ENCODE measurements at regions of chr4 and their contacts with region 1.

Region 1: DNA sequence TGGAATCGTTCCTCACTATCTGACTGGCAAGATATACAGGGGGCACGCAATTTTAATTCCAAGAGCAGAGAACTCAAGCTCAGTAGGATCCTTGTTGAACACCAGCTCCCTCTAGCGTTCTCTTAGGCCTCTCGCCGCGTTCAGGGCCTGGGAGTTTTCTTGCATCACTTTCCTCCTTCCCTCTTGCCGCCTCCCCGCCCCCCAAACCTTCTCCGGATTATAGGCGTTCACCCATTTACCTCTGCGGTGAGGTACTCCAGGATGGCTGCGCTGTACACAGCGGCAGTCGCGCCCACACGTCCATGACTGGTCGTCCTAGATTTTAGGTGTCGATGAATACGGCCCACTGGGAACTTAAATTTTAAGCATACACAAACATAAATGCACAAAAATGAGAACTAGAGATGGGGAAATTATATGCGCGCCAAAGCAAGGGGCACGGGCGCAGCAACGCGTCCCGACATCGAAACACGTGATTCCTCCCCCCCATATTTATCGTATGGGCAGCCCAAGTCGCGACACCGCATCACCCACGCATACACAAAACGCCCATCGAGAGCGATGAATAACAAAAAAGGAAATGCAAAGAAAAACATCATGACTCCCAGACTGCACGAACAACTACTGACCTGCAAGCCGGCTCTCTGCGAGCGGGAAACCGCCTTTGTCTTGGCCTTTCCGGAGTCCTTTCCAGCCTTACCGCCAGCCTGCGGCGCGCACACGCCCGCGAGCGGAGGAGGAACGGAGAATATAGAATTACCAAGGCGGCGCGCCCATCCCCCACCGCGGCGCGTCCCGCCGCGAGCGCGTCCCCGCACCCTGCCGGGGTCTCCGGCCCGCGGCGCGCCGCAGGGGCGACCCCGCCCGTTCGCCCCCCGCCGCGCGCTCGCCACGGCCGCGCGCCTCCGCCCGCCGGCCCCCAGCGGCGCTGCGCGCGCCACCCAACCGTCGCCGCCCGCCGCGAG is 759 bp downstream of the H2AZ1 start:
- DNase-seq: peak; percentile 66 to 95 (median 81)
- ATAC-seq: peak; percentile 23 to 33 (median 28)
- H3K4me3 ChIP-seq: peak overlapping the region; percentile 73 to 99
- H3K4me3 Mint-ChIP-seq: no peak overlapping the region
- H3K27ac ChIP-seq: peak overlapping the region; percentile 95
- H3K27ac Mint-ChIP-seq: no peak overlapping the region
- H3K4me1 ChIP-seq: peaks cover 28 to 32% of the 10 kb centered on the region in 2 experiments
- H3K4me1 Mint-ChIP-seq: peaks cover 20 to 37% (median 30%) of the 10 kb centered on the region in 3 donors
- H3K27me3 ChIP-seq: no peaks in the 10 kb centered on the region
- H3K27me3 Mint-ChIP-seq: no peaks in the 10 kb centered on the region

Region 2: DNA sequence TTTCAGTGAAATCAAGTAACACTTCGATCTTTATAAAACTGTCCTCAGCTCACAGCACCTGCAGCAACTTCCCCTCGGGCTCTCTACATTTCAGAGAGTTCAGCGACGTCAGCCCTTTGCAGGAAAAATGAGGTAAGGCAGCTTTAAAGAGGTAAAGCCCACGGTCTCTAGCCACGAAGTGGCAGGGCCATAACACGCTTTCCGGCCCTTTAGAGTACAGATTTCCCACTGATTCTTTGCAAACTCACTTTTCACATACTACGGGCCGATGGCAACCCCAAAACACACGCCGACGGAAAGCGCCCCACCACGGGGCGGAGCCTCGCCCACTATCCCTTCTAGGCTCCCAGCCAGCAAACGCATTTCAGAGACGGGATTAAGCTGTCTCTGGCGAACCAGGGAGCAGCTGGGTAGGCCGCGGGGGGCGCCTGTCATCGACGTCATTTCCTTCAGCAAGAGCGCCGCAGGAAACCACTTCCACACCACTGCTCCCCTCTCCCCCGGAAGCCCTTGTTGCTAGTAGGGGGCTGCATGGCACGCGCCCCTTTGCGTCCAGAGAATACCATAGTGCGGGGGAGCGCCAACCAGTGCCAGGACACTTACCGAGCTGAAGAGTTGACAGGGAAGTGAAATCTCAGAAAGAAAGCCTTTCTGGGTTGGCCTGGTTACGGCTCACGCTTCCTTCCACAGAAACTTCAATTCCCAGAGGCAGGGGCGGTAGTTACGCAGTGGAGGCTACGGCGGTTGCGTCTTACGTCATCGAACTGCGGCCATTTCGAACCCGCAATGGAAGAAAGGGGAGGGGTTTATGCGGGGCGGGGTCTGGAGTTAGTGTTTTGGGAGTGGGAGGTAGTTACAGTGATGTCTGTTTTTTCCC is 385.8 kb before region 1 on chr4 and contains the start of gene TRMT10A:
- CTCF ChIA-PET with region 1: interaction called, 3 to 12 read pairs
- POLR2A ChIA-PET with region 1: interaction called in 1 of 2 experiments, 3 read pairs
- DNase-seq: peak; percentile 86 to 99 (median 97)
- ATAC-seq: peak; percentile 88 to 93 (median 92)
- H3K4me3 ChIP-seq: peak within 1 kb of the TSS; percentile 80 to 91
- H3K4me3 Mint-ChIP-seq: peak within 1 kb of the TSS; percentile 86 to 99 (median 98)
- H3K27ac ChIP-seq: peak within 1 kb of the TSS; percentile 99
- H3K27ac Mint-ChIP-seq: peak within 1 kb of the TSS; percentile 99 to 100
- H3K4me1 ChIP-seq: peaks cover 2 to 12% of the 10 kb centered on the region in 2 experiments
- H3K4me1 Mint-ChIP-seq: peaks cover 17 to 26% (median 20%) of the 10 kb centered on the region in 3 donors
- H3K27me3 ChIP-seq: peaks cover 4 to 5% of the 10 kb centered on the region in 2 experiments
- H3K27me3 Mint-ChIP-seq: peaks cover 24 to 25% of the 10 kb centered on the region in 2 donors
- total RNA-seq, gene TRMT10A: 3.4 to 5.3 (median 4.0) TPM

Region 3: GRCh38 chr4:99816545-99817308 is 132.6 kb before region 1 on chr4 and contains the start of gene DAPP1:
- CTCF ChIA-PET with region 1: interaction called, 3 to 16 read pairs
- POLR2A ChIA-PET with region 1: interaction called in 1 of 2 experiments, 8 read pairs
- DNase-seq: peak; percentile 53 to 89 (median 77)
- ATAC-seq: peak; percentile 97 to 98 (median 98)
- H3K4me3 ChIP-seq: peak within 1 kb of the TSS; percentile 51 to 75
- H3K4me3 Mint-ChIP-seq: peak within 1 kb of the TSS; percentile 85 to 91 (median 89)
- H3K27ac ChIP-seq: peak within 1 kb of the TSS; percentile 65
- H3K27ac Mint-ChIP-seq: peak within 1 kb of the TSS; percentile 89 to 96
- H3K4me1 ChIP-seq: peaks cover 22 to 26% of the 10 kb centered on the region in 2 experiments
- H3K4me1 Mint-ChIP-seq: peaks cover 60 to 62% (median 62%) of the 10 kb centered on the region in 3 donors
- H3K27me3 ChIP-seq: no peaks in the 10 kb centered on the region
- H3K27me3 Mint-ChIP-seq: no peaks in the 10 kb centered on the region
- total RNA-seq, gene DAPP1: 12.9 to 18.7 (median 14.3) TPM

Region 4: GRCh38 chr4:99921174-99921573 is 28.1 kb before region 1 on chr4:
- CTCF ChIA-PET with region 1: interaction called, 9 to 10 read pairs
- POLR2A ChIA-PET with region 1: interaction called, 3 to 4 read pairs
- DNase-seq: peak in 7 of 35 experiments; percentile 3 to 46 (median 7)
- ATAC-seq: peak; percentile 43 to 99 (median 84)
- H3K4me3 ChIP-seq: no peak overlapping the region
- H3K4me3 Mint-ChIP-seq: peak overlapping the region in 1 of 3 donors; percentile 39
- H3K27ac ChIP-seq: no peak overlapping the region
- H3K27ac Mint-ChIP-seq: peak overlapping the region; percentile 71 to 85
- H3K4me1 ChIP-seq: peaks cover 4 to 21% of the 10 kb centered on the region in 2 experiments
- H3K4me1 Mint-ChIP-seq: peaks cover 17 to 34% (median 24%) of the 10 kb centered on the region in 3 donors
- H3K27me3 ChIP-seq: no peaks in the 10 kb centered on the region
- H3K27me3 Mint-ChIP-seq: no peaks in the 10 kb centered on the region

Region 5: DNA sequence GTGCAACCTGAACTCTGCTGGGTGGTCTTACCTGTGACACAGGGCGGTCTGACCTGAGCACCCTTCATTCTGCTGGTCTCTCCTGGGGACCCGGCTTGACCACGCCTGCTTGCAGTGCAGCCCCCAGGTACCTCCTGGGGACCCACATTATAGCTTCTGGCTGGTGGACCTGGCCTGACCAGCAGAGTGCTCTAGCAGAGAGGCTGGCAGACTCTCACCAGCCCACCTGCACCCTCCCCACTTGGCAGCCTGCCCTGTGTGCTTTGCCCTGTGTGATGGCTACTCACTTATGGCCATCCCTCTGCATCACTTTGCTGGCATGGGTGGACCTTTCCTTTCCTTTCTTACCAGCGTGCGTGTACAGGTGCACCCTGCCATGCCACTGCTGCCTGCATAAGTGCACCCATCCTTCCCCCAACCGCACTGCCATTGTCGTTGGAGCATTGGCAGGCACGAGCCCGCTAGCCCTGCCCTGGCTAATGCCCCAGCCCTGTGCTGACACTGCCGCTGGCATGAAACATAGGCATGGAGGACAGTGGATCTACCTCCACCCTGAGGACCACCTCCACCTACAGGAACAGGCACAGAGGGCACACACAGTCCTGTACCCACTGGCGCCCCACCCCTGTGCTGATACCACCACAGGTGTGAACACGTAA is 22.3 kb after region 1 on chr4:
- CTCF ChIA-PET with region 1: no interaction called
- POLR2A ChIA-PET with region 1: no interaction called
- DNase-seq: no peak
- ATAC-seq: no peak
- H3K4me3 ChIP-seq: no peak overlapping the region
- H3K4me3 Mint-ChIP-seq: no peak overlapping the region
- H3K27ac ChIP-seq: no peak overlapping the region
- H3K27ac Mint-ChIP-seq: no peak overlapping the region
- H3K4me1 ChIP-seq: no peaks in the 10 kb centered on the region
- H3K4me1 Mint-ChIP-seq: peaks cover 0 to 2% (median 2%) of the 10 kb centered on the region in 3 donors
- H3K27me3 ChIP-seq: peaks cover 0 to 16% of the 10 kb centered on the region in 2 experiments
- H3K27me3 Mint-ChIP-seq: peaks cover 0 to 5% of the 10 kb centered on the region in 2 donors

Region 6: GRCh38 chr4:99998062-99998867 is 48.9 kb after region 1 on chr4:
- CTCF ChIA-PET with region 1: no interaction called
- POLR2A ChIA-PET with region 1: interaction called in 1 of 2 experiments, 11 read pairs
- DNase-seq: peak in 1 of 35 experiments; percentile 23
- ATAC-seq: no peak
- H3K4me3 ChIP-seq: no peak overlapping the region
- H3K4me3 Mint-ChIP-seq: no peak overlapping the region
- H3K27ac ChIP-seq: no peak overlapping the region
- H3K27ac Mint-ChIP-seq: no peak overlapping the region
- H3K4me1 ChIP-seq: no peaks in the 10 kb centered on the region
- H3K4me1 Mint-ChIP-seq: no peaks in the 10 kb centered on the region
- H3K27me3 ChIP-seq: no peaks in the 10 kb centered on the region
- H3K27me3 Mint-ChIP-seq: no peaks in the 10 kb centered on the region